ENCODE measurements at regions of chr5 and their contacts with region 1.

Region 1: GRCh38 chr5:61177716-61178115 is 15.4 kb upstream of the SMIM15 start:
- DNase-seq: no peak
- ATAC-seq: no peak
- H3K4me3 ChIP-seq: no peak overlapping the region
- H3K27ac ChIP-seq: no peak overlapping the region
- H3K4me1 ChIP-seq: peaks cover 0 to 5% (median 0%) of the 10 kb centered on the region in 12 donors
- H3K27me3 ChIP-seq: no peaks in the 10 kb centered on the region
- CTCF ChIP-seq: no peak
- POLR2A ChIP-seq: no peak

Region 2: GRCh38 chr5:60822285-60822556 is 355.5 kb before region 1 on chr5:
- intact Hi-C with region 1: no loop called
- DNase-seq: no peak
- ATAC-seq: no peak
- H3K4me3 ChIP-seq: no peak overlapping the region
- H3K27ac ChIP-seq: no peak overlapping the region
- H3K4me1 ChIP-seq: peaks cover 0 to 2% (median 0%) of the 10 kb centered on the region in 12 donors
- H3K27me3 ChIP-seq: no peaks in the 10 kb centered on the region
- CTCF ChIP-seq: no peak
- POLR2A ChIP-seq: no peak

Region 3: DNA sequence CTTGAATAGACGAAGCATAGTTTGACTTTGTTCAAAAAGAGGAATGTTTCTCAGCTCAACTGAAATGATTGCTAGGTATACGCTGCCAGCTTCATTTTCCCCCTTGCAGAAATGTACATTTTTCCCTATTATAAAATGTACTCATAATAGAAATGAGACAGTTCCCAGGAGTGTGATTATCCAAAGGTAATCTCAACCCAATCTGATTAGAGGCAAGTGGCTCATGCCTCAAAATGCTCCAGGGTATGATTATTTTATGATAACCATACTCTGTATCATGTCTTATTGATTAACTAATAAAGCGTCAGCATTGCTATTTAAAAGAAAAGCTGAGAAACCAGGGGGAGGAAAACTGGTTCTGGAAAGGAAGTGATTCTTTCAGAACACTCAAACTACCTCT is 39.5 kb after region 1 on chr5:
- intact Hi-C with region 1: no loop called
- DNase-seq: no peak
- ATAC-seq: no peak
- H3K4me3 ChIP-seq: no peak overlapping the region
- H3K27ac ChIP-seq: no peak overlapping the region
- H3K4me1 ChIP-seq: peaks cover 0 to 7% (median 0%) of the 10 kb centered on the region in 12 donors
- H3K27me3 ChIP-seq: no peaks in the 10 kb centered on the region
- CTCF ChIP-seq: no peak
- POLR2A ChIP-seq: no peak

Region 4: DNA sequence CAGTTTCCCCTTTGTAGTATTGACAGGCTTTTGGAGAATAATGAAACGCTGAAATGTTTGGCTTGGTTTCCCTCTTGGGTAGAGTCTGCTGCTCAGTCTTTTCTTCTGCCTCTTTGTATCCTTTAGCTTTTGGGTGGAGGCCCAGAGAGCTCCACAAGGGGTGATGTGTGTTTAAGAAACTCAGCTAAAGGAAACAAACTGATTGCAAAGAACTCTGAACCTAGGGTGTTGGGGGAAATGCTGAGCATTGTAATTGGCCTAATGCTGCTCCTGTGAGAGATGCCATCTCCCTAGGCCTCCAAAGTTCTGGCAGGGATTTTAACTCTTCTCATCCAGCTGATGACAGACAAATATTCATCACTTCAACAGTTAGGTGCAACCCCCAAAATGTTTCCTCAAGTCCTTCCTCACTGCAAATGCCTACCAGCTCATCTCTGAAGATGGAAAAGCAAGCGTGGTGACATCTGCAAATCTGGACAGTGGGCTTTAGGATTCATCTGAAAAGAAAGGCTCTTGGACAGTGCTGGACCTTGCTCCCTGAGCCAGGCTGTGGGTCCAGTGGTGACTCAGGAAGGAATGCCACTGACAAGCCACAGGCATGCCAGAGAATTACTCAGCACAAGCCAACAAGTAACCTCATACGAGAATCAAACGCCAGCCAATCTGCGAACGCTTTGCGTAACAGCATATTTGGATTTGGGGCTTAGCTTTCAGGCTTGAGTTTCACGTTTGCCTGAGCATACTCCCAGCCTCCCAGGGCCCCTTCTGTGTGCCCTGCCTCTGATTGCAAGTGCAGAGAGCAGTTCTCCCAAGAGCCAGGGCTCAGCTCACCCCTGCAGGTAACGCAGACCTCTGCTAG is 123.9 kb after region 1 on chr5:
- intact Hi-C with region 1: loop called in 1 of 10 experiments (anchors 10 kb)
- DNase-seq: peak in 4 of 5 donors; percentile 33 to 72 (median 61)
- ATAC-seq: peak; percentile 78 to 95 (median 89)
- H3K4me3 ChIP-seq: no peak overlapping the region
- H3K27ac ChIP-seq: peak overlapping the region in 7 of 12 donors; percentile 14 to 52 (median 36)
- H3K4me1 ChIP-seq: peaks cover 0 to 35% (median 7%) of the 10 kb centered on the region in 12 donors
- H3K27me3 ChIP-seq: peaks cover 0 to 4% (median 0%) of the 10 kb centered on the region in 9 donors
- CTCF ChIP-seq: no peak
- POLR2A ChIP-seq: no peak

Region 5: GRCh38 chr5:61319388-61320146 is 141.9 kb after region 1 on chr5:
- intact Hi-C with region 1: loop called in 1 of 10 experiments (anchors 10 kb)
- DNase-seq: peak in 2 of 5 donors; percentile 21 to 29
- ATAC-seq: peak; percentile 48 to 83 (median 71)
- H3K4me3 ChIP-seq: peak overlapping the region in 3 of 12 donors; percentile 1 to 28 (median 10)
- H3K27ac ChIP-seq: peak overlapping the region in 6 of 12 donors; percentile 0 to 89 (median 40)
- H3K4me1 ChIP-seq: peaks cover 0 to 58% (median 4%) of the 10 kb centered on the region in 12 donors
- H3K27me3 ChIP-seq: no peaks in the 10 kb centered on the region
- CTCF ChIP-seq: no peak
- POLR2A ChIP-seq: no peak

Measured in heart left ventricle (tissue), 16 donors.